ENCODE measurements at regions of chr11 and their contacts with region 1.

Region 1: DNA sequence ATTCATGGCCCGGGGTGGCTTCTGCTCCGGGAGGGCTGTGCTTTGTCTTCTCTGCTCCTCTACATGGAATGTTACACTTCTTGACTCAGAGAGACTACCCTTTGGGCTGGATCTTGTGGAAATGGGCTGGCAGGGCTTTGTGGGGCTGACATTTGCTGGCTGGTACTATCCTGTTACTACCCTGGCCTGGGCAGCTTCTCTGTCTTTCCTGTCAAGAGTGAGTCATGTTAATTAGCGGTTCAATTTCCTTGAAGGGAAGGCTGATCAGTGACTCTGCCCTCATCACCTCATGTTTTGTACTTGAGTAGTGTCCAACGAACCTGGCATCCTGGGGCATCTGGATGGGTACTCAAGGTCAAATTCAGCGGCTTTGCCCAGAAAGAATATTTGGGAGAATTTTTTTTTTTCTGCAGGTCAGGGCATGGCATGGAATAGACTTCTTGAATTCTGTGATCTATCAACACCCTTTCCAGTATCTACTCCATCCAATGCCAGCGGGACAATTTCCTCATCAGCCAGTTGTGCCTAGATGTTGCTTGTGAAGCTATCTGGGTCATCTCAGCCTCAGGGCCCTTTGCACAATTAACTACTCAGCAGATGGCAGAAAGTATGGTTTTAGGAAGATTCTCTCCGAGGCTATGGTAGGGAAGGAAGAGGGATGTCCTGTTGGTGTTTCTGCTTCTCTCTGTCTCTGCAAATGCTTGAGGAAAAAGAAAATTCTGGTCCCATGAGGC is 140.5 kb upstream of the PLET1 start:
- DNase-seq: no peak

Region 2: DNA sequence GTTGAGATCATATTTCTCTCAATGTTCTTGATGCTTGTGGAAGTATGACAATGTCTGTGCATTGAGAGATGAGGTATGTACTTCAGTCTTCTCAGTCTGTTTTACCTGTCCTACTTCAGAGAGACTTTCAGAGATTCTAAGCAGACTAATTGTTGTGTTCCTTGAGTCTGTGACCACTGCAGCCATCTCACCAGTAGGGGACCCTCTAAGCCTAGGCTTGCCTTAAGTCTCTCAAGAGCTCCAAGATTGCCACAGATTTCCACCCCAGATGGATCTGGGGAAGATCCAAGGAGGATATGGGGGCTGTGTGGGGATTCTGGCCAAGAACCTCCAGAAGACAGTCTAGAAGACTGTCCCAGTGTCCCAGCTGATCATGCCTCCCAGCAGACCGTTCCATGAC is 39.3 kb after region 1 on chr11:
- intact Hi-C with region 1: loop called in 1 of 2 experiments (anchors 2 kb)
- DNase-seq: no peak

Measured in posterior vena cava (tissue), 2 donors.